Mammary epithelial cell (primary cell): ENCODE measurements at regions of chr7 and their contacts with region 1.

Region 1: GRCh38 chr7:34277016-34277802 is 371.9 kb downstream of the BMPER start:
- DNase-seq: no peak
- H3K4me3 ChIP-seq: no peak overlapping the region
- H3K27ac ChIP-seq: no peak overlapping the region
- H3K4me1 ChIP-seq: no peaks in the 10 kb centered on the region
- H3K27me3 ChIP-seq: no peaks in the 10 kb centered on the region
- CTCF ChIP-seq: no peak

Region 2: DNA sequence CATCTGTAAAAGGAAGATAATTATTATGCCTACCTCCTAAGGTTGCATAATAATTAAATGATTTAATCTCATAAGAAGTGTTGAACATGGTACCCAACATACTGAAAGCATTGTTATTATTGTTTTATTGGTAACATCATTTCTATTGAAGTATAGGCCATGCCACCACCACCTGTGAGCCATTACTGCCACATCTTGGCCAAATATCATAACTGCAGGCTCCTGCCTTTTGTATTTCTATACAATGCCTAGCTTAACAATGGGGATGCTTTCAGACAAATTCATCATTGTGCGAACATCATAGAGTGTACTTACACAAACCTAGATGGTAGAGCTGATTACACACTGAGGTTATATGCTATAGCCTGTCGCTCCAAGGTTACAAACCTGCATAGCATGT is 319.7 kb after region 1 on chr7:
- CTCF ChIA-PET with region 1: no interaction called
- dilution Hi-C with region 1: no loop called
- in situ Hi-C with region 1: loop called (anchors 25 kb)
- intact Hi-C with region 1: loop called (anchors 1 kb)
- DNase-seq: peak; percentile 16
- H3K4me3 ChIP-seq: no peak overlapping the region
- H3K27ac ChIP-seq: no peak overlapping the region
- H3K4me1 ChIP-seq: no peaks in the 10 kb centered on the region
- H3K27me3 ChIP-seq: no peaks in the 10 kb centered on the region
- CTCF ChIP-seq: peak; percentile 72 to 74